ENCODE measurements at regions of chr1 and their contacts with region 1.

Region 1: GRCh38 chr1:22969304-22969709 is 3.4 kb downstream of the LACTBL1 start:
- DNase-seq: no peak
- H3K4me3 ChIP-seq: no peak overlapping the region
- H3K27ac ChIP-seq: no peak overlapping the region
- H3K4me1 ChIP-seq: peaks cover 18% of the 10 kb centered on the region
- H3K27me3 ChIP-seq: no peaks in the 10 kb centered on the region
- CTCF ChIP-seq: no peak

Region 2: DNA sequence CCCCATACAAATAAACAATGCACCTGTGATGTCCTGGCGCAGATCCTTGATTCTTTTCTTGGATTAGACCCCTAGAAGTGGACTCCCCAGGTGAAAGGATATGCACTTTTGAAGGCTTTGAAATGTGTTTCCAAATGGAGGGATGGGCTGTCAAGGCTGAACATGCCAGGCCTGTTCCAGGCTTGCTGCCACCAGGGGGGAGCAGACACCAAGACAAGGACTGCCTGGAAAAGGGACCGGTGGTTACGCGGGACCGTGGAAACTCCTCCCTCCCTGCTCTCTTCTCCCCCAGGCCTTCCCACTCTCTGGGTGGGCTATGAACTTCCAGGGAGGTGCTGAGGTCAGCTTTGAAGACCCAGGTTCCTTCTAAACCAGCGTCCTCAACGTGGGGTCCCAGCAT is 303.6 kb before region 1 on chr1:
- CTCF ChIA-PET with region 1: no interaction called
- POLR2A ChIA-PET with region 1: no interaction called
- intact Hi-C with region 1: loop called (anchors 1 kb)
- DNase-seq: peak in 1 of 2 experiments; percentile 44
- H3K4me3 ChIP-seq: no peak overlapping the region
- H3K27ac ChIP-seq: no peak overlapping the region
- H3K4me1 ChIP-seq: no peaks in the 10 kb centered on the region
- H3K27me3 ChIP-seq: no peaks in the 10 kb centered on the region; the same call in 1 of the 2 replicates
- CTCF ChIP-seq: peak; percentile 66

Region 3: DNA sequence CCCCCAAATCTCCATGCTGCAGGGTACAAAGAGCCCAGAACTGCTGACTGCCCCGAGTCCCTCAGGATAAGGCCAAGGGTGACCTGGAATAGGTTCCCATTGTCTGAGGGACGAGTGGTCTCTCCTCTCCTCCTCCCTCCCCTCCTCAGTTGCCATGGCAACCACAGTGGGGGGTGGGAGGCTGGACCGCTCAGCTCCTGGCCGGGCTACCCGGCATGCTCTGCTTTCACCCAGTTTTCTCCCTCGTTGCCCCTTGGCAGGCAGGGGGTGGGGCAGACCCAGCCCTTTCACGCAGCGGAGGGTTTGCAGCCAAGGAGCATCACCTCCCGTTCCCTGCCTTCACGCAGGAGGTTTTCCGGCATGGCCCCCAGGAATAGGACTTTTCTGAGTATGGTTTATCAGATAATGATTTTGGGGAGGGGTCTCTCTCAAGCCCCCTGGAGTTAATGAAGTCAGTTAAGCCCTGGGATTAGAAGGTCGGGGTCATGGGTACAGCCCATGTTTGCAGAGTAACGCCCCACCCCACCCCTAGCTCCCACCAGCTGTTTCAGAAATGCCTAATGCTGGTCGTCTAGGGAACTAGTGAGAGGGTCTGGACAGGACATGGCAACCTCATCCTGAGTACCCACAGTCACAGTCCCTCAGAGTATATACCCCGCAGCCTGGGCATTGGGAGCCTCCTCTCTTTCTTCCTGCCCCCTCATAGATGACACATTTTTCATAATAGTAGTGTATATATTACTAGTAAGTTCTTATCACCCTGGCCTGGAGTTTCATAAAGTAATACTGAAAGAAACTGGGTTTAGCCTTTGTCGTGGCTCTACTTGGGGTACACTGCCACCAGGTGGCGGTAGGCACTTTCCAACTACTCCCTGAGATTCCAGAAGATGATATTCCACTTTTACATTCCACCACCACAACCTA is 295.6 kb before region 1 on chr1:
- CTCF ChIA-PET with region 1: no interaction called
- POLR2A ChIA-PET with region 1: no interaction called
- intact Hi-C with region 1: loop called (anchors 2 kb)
- DNase-seq: peak in 1 of 2 experiments; percentile 64
- H3K4me3 ChIP-seq: no peak overlapping the region
- H3K27ac ChIP-seq: no peak overlapping the region
- H3K4me1 ChIP-seq: no peaks in the 10 kb centered on the region
- H3K27me3 ChIP-seq: no peaks in the 10 kb centered on the region
- CTCF ChIP-seq: peak; percentile 81

Region 4: GRCh38 chr1:22689505-22689904 is 279.8 kb before region 1 on chr1:
- CTCF ChIA-PET with region 1: no interaction called
- POLR2A ChIA-PET with region 1: interaction called, 19 read pairs
- intact Hi-C with region 1: no loop called
- DNase-seq: peak; percentile 84 to 94
- H3K4me3 ChIP-seq: no peak overlapping the region
- H3K27ac ChIP-seq: peak overlapping the region; percentile 46; the same call in 1 of the 2 replicates
- H3K4me1 ChIP-seq: peaks cover 11% of the 10 kb centered on the region
- H3K27me3 ChIP-seq: no peaks in the 10 kb centered on the region
- CTCF ChIP-seq: no peak

Measured in PC-9 (cell line).